ENCODE measurements at regions of chr3 and their contacts with region 1.

Region 1: GRCh38 chr3:185282696-185283394 is 29.0 kb upstream of the EHHADH start:
- DNase-seq: peak; percentile 97 to 98 (median 97)
- H3K4me3 ChIP-seq: peak overlapping the region; percentile 44
- H3K27ac ChIP-seq: peak overlapping the region in 1 of 2 donors; percentile 52
- H3K4me1 ChIP-seq: peaks cover 8% of the 10 kb centered on the region
- H3K27me3 ChIP-seq: no peaks in the 10 kb centered on the region
- CTCF ChIP-seq: peak in 2 of 3 donors; percentile 10
- EP300 ChIP-seq: no peak
- POLR2A ChIP-seq: peak; percentile 77

Region 2: DNA sequence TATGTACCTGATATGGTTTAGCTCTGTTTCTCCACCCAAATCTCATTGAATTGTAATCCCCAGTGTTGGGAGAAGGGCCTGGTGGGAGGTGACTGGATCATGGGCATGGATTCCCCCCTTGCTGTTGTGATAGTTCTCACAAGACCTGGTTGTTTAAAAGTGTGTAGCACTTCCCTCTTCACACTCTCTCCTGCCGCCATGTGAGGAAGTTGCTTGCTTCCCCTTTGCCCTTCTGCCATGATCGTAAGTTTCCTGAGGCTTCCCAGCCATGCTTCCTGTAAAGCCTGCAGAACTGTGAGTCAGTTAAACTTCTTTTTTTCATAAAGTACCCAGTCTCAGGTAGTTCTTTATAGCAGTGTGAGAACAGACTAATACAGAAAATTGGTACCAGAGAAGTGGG is 223.1 kb before region 1 on chr3:
- intact Hi-C with region 1: no loop called
- DNase-seq: no peak
- H3K4me3 ChIP-seq: no peak overlapping the region
- H3K27ac ChIP-seq: no peak overlapping the region
- H3K4me1 ChIP-seq: no peaks in the 10 kb centered on the region
- H3K27me3 ChIP-seq: no peaks in the 10 kb centered on the region
- CTCF ChIP-seq: no peak
- EP300 ChIP-seq: no peak
- POLR2A ChIP-seq: no peak

Region 3: DNA sequence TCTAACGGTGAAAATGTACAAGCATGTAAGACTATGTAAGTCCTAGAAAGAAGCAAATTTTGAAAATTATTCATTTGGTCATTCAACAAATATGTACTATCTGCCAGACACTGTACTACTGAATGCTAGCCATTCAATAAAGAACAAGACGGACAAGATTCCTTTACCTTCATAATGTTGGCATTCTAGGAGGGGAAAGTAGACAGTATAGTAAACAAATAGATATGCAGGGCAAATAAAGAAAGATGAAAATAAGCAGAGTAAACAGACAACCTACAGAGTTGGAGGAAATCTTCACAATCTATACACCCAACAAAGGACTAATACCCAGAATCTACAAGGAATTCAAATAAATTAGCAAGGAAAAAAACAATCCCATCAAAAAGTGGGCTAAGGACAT is 162.7 kb before region 1 on chr3:
- intact Hi-C with region 1: no loop called
- DNase-seq: no peak
- H3K4me3 ChIP-seq: no peak overlapping the region
- H3K27ac ChIP-seq: no peak overlapping the region
- H3K4me1 ChIP-seq: no peaks in the 10 kb centered on the region
- H3K27me3 ChIP-seq: no peaks in the 10 kb centered on the region
- CTCF ChIP-seq: no peak
- EP300 ChIP-seq: no peak
- POLR2A ChIP-seq: no peak

Region 4: DNA sequence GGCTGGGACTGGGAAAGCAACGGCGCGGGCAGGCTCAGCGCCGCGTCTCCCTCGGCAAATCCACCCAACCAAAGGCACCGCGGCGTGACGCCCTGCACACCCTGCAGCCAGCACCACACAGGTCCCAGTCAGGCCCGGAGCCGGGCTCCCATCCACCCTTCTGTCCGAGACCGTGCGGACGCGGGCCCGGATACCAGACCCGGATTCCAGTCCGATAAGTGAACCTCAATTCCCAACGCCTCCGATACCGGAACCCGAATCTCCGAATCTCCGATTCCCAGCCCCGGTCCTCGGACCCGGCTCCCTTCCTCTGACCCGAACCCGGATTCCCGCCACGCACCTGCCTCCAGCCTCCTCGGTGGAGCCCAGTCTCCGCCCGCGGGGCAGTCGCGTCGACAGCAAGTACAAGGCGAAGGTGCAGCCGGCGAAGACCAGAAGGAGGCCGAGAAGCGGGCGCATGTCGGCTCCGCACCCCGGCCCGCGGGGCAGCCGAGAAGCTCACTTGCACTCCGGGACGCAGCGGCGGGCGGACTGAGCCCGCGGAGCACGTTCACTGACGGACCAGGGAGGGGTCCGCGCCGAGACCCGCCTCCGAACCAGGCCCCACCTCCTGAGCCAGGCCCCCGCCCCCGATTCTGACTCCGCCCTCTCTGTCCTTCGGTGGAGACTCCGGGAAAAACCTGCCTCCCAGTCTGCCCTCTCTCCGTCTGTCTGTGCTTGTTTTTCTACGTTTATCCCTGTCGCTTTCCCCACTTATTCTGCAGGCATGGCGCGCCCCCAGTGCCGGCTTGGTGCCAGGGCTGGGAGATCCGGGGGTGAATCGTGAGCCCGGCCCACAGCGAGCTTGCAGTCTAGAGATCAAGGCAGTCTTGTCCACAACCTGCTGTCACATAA is 215.9 kb after region 1 on chr3 and contains the start of gene TMEM41A:
- intact Hi-C with region 1: loop called in 1 of 4 experiments (anchors 10 kb)
- DNase-seq: peak; percentile 92 to 96 (median 94)
- H3K4me3 ChIP-seq: peak within 1 kb of the TSS; percentile 72
- H3K27ac ChIP-seq: peak within 1 kb of the TSS; percentile 13 to 77
- H3K4me1 ChIP-seq: peaks cover 8% of the 10 kb centered on the region
- H3K27me3 ChIP-seq: no peaks in the 10 kb centered on the region
- CTCF ChIP-seq: no peak
- EP300 ChIP-seq: no peak
- POLR2A ChIP-seq: peak; percentile 57
- total RNA-seq, gene TMEM41A: 13.9 to 21.2 (median 17.8) TPM

Measured in ovary (tissue), 10 donors.